ENCODE measurements at regions of chr6 and their contacts with region 1.

Region 1: GRCh38 chr6:27472617-27473400 is at the start of gene ZNF184:
- DNase-seq: peak; percentile 68 to 94 (median 80)
- ATAC-seq: peak; percentile 59
- H3K4me3 ChIP-seq: peak within 1 kb of the TSS; percentile 85
- H3K4me3 Mint-ChIP-seq: peak within 1 kb of the TSS; percentile 88
- H3K27ac ChIP-seq: peak within 1 kb of the TSS; percentile 88 to 96
- H3K27ac Mint-ChIP-seq: peak within 1 kb of the TSS; percentile 91
- H3K4me1 ChIP-seq: peaks cover 21% of the 10 kb centered on the region
- H3K4me1 Mint-ChIP-seq: peaks cover 53% of the 10 kb centered on the region
- H3K27me3 ChIP-seq: no peaks in the 10 kb centered on the region
- H3K27me3 Mint-ChIP-seq: no peaks in the 10 kb centered on the region
- CTCF ChIP-seq: no peak
- total RNA-seq, gene ZNF184: 19.6 to 21.1 TPM

Region 2: GRCh38 chr6:26304797-26305640 is 1167.8 kb before region 1 on chr6:
- CTCF ChIA-PET with region 1: no interaction called
- POLR2A ChIA-PET with region 1: no interaction called
- intact Hi-C with region 1: loop called (anchors 5 to 10 kb)
- DNase-seq: peak in 12 of 14 experiments; percentile 48 to 90 (median 62)
- ATAC-seq: peak; percentile 73
- H3K4me3 ChIP-seq: peak overlapping the region; percentile 60
- H3K4me3 Mint-ChIP-seq: peak overlapping the region; percentile 93
- H3K27ac ChIP-seq: peak overlapping the region in 1 of 2 donors; percentile 26
- H3K27ac Mint-ChIP-seq: peak overlapping the region; percentile 93
- H3K4me1 ChIP-seq: peaks cover 5% of the 10 kb centered on the region
- H3K4me1 Mint-ChIP-seq: peaks cover 33% of the 10 kb centered on the region
- H3K27me3 ChIP-seq: no peaks in the 10 kb centered on the region
- H3K27me3 Mint-ChIP-seq: peaks cover 12% of the 10 kb centered on the region
- CTCF ChIP-seq: no peak

Region 3: DNA sequence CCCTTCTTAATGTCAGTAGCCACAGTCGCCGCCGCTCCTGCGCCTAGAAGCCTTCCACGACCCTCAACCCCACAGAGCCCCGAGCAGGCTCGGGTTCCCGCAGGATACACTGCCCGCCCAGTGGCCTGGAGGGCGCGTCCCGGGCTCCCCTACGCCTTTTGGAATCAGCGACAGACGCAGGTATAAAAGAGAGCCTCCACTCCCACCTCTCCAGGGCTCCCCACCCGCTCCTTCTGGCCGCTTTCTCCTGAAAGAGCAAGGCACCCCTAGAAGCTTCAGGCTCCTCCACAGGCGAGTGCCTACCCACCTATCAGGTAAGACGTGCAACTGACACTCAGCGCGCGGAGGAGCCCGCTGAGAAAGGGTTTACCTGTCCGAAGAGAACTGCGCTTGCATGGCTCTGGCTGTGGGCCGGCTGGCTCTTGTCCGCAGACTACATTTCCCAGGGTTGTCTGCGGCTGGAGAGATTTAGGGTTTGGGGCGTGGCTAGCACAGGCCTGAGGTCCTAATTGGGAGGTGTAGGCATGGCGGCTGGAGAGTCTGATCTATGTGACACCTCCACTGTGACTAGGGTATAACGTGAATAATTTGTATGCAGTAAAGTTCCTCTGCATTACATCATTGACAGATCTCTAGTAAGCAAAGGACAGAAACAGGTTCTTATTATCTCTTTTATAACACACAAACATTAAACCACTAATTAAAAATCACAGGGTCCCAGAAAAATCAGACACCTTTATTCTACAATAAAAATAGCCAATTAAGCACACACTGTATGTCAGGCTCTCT is 97.8 kb before region 1 on chr6:
- CTCF ChIA-PET with region 1: no interaction called
- POLR2A ChIA-PET with region 1: no interaction called
- intact Hi-C with region 1: loop called in 1 of 2 experiments (anchors 5 kb)
- DNase-seq: peak; percentile 48 to 88 (median 64)
- ATAC-seq: peak; percentile 95
- H3K4me3 ChIP-seq: peak overlapping the region; percentile 66
- H3K4me3 Mint-ChIP-seq: peak overlapping the region; percentile 92
- H3K27ac ChIP-seq: no peak overlapping the region
- H3K27ac Mint-ChIP-seq: peak overlapping the region; percentile 81
- H3K4me1 ChIP-seq: peaks cover 11% of the 10 kb centered on the region
- H3K4me1 Mint-ChIP-seq: peaks cover 33% of the 10 kb centered on the region
- H3K27me3 ChIP-seq: no peaks in the 10 kb centered on the region
- H3K27me3 Mint-ChIP-seq: peaks cover 7% of the 10 kb centered on the region
- CTCF ChIP-seq: no peak

Region 4: DNA sequence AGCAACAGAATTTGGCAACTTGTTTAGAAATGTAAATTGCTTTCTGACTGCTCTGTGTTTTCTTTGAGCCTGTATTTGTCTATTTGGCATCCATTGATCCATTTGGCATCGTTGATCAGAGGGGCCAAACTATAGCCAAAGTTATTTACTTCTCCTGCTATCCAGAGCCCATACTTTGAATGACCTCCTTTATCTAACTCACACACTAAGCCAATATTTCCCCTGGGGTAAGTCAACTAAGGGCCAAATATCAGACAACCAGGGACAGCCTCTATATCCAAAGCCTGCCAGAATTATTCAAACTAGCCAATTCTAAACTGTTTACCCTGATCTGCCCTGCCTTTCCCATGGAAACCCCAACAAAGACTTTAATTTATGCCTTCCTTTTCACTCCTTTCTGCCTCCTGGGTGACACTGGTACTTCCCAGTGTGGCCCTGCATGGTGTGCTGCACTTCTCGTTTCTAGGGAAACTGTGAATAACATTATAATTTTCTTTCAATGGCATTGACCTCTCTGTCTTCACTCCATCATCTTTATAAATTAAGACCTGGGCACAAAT is 19.9 kb after region 1 on chr6:
- CTCF ChIA-PET with region 1: no interaction called
- POLR2A ChIA-PET with region 1: no interaction called
- intact Hi-C with region 1: no loop called
- DNase-seq: no peak
- ATAC-seq: no peak
- H3K4me3 ChIP-seq: no peak overlapping the region
- H3K4me3 Mint-ChIP-seq: no peak overlapping the region
- H3K27ac ChIP-seq: no peak overlapping the region
- H3K27ac Mint-ChIP-seq: no peak overlapping the region
- H3K4me1 ChIP-seq: peaks cover 14% of the 10 kb centered on the region
- H3K4me1 Mint-ChIP-seq: peaks cover 19% of the 10 kb centered on the region
- H3K27me3 ChIP-seq: peaks cover 23 to 28% of the 10 kb centered on the region in 2 experiments
- H3K27me3 Mint-ChIP-seq: peaks cover 55% of the 10 kb centered on the region
- CTCF ChIP-seq: no peak

Region 5: DNA sequence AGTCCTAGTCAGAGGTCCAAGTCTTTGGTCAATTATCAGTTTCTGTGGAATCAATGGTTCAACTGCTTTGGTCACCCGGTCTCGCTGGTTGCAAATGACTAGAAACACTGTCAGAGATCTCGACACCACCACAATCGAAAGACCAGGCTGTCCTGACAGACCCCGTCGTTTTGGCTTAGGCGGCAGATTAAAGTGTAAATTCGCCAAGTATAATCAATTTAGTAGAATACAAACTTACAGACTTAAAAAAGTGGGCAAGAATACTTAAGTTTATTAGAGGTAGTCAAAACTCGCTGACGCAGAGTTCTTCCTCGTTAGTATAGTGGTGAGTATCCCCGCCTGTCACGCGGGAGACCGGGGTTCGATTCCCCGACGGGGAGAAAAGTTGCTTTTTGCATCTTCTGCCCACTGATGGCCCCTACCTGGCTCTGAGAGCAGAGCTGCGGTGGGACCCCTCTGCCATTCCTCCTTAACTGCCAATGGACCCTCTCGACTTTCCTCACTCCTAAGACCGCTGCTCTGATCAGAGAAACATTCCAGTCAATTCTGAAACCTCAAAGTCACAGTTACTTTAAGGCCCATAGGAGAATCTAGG is 30.7 kb after region 1 on chr6:
- CTCF ChIA-PET with region 1: no interaction called
- POLR2A ChIA-PET with region 1: interaction called, 43 read pairs
- intact Hi-C with region 1: loop called in 1 of 2 experiments (anchors 2 kb)
- DNase-seq: peak; percentile 59 to 89 (median 75)
- ATAC-seq: peak; percentile 58
- H3K4me3 ChIP-seq: peak overlapping the region; percentile 62
- H3K4me3 Mint-ChIP-seq: peak overlapping the region; percentile 95
- H3K27ac ChIP-seq: peak overlapping the region; percentile 2 to 33
- H3K27ac Mint-ChIP-seq: peak overlapping the region; percentile 94
- H3K4me1 ChIP-seq: peaks cover 15% of the 10 kb centered on the region
- H3K4me1 Mint-ChIP-seq: peaks cover 46% of the 10 kb centered on the region
- H3K27me3 ChIP-seq: peaks cover 0 to 11% of the 10 kb centered on the region in 2 experiments
- H3K27me3 Mint-ChIP-seq: peaks cover 40% of the 10 kb centered on the region
- CTCF ChIP-seq: no peak

Region 6: GRCh38 chr6:27575594-27576361 is 103.0 kb after region 1 on chr6:
- CTCF ChIA-PET with region 1: no interaction called
- POLR2A ChIA-PET with region 1: no interaction called
- intact Hi-C with region 1: no loop called
- DNase-seq: no peak
- ATAC-seq: no peak
- H3K4me3 ChIP-seq: no peak overlapping the region
- H3K4me3 Mint-ChIP-seq: no peak overlapping the region
- H3K27ac ChIP-seq: no peak overlapping the region
- H3K27ac Mint-ChIP-seq: no peak overlapping the region
- H3K4me1 ChIP-seq: no peaks in the 10 kb centered on the region
- H3K4me1 Mint-ChIP-seq: no peaks in the 10 kb centered on the region
- H3K27me3 ChIP-seq: peaks cover 5 to 41% of the 10 kb centered on the region in 2 experiments
- H3K27me3 Mint-ChIP-seq: peaks cover 79% of the 10 kb centered on the region
- CTCF ChIP-seq: no peak

Region 7: GRCh38 chr6:27687154-27688013 is 214.6 kb after region 1 on chr6:
- CTCF ChIA-PET with region 1: interaction called, 3 read pairs
- POLR2A ChIA-PET with region 1: interaction called, 3 read pairs
- intact Hi-C with region 1: loop called in 1 of 2 experiments (anchors 5 kb)
- DNase-seq: peak; percentile 53 to 87 (median 68)
- ATAC-seq: peak; percentile 74
- H3K4me3 ChIP-seq: peak overlapping the region; percentile 88
- H3K4me3 Mint-ChIP-seq: peak overlapping the region; percentile 95
- H3K27ac ChIP-seq: peak overlapping the region in 1 of 2 donors; percentile 37
- H3K27ac Mint-ChIP-seq: peak overlapping the region; percentile 97
- H3K4me1 ChIP-seq: peaks cover 14% of the 10 kb centered on the region
- H3K4me1 Mint-ChIP-seq: peaks cover 38% of the 10 kb centered on the region
- H3K27me3 ChIP-seq: peaks cover 5 to 9% of the 10 kb centered on the region in 2 experiments
- H3K27me3 Mint-ChIP-seq: peaks cover 40% of the 10 kb centered on the region
- CTCF ChIP-seq: peak; percentile 66

Region 8: GRCh38 chr6:28863604-28864320 is 1391.0 kb after region 1 on chr6:
- CTCF ChIA-PET with region 1: no interaction called
- POLR2A ChIA-PET with region 1: interaction called, 4 read pairs
- intact Hi-C with region 1: loop called in 1 of 2 experiments (anchors 10 kb)
- DNase-seq: peak; percentile 69 to 93 (median 80)
- ATAC-seq: peak; percentile 39
- H3K4me3 ChIP-seq: peak overlapping the region; percentile 82
- H3K4me3 Mint-ChIP-seq: peak overlapping the region; percentile 88
- H3K27ac ChIP-seq: peak overlapping the region; percentile 30 to 47
- H3K27ac Mint-ChIP-seq: peak overlapping the region; percentile 93
- H3K4me1 ChIP-seq: peaks cover 34% of the 10 kb centered on the region
- H3K4me1 Mint-ChIP-seq: peaks cover 51% of the 10 kb centered on the region
- H3K27me3 ChIP-seq: no peaks in the 10 kb centered on the region
- H3K27me3 Mint-ChIP-seq: peaks cover 7% of the 10 kb centered on the region
- CTCF ChIP-seq: peak; percentile 10

Measured in CD4-positive, alpha-beta T cell (primary cell).